H1 (cell line): ENCODE measurements at regions of chr6 and their contacts with region 1.

Region 1: GRCh38 chr6:33607784-33608161 is 13.3 kb upstream of the ITPR3 start:
- DNase-seq: no peak
- H3K4me3 ChIP-seq: no peak overlapping the region
- H3K27ac ChIP-seq: no peak overlapping the region
- H3K4me1 ChIP-seq: peaks cover 6 to 42% (median 26%) of the 10 kb centered on the region in 4 experiments
- H3K27me3 ChIP-seq: no peaks in the 10 kb centered on the region
- CTCF ChIP-seq: peak; percentile 38 to 63 (median 61); a peak in 3 of 4 replicates
- EP300 ChIP-seq: no peak
- POLR2A ChIP-seq: no peak
- RAD21 ChIP-seq: peak; percentile 60 to 63

Region 2: DNA sequence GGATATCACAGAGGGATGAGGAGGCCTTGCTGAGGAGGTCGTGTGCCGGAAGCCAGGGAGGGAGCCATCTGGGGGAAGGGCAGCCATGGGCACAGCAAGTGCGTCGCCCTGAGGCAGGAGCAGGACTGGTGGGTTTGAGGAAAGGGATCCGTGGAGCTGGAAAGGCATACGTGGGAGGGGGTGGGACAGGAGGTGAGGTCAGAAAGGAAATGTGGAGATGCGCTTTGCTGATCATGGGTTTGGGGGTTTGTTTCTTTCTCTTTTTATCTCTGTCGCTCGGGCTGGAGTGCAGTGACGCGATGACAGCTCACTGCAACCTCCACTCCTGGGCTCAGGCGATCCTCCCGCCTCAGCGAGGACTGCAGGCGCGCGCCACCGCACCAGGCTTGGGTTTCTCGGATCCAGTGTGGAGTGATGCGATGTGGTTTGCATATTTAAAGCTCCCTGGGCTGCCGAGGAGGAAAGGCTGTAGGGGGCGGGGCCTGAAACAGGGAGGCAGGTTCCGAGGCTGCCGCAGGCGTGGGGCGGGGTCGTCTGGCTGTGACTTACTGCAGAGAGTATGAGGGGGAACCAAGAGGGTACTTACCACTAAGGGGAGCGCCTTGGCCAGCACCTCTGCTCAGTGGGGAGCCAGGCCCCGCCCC is 15.2 kb before region 1 on chr6:
- CTCF ChIA-PET with region 1: interaction called, 57 read pairs
- POLR2A ChIA-PET with region 1: interaction called, 6 read pairs
- DNase-seq: peak in 1 of 2 experiments; percentile 87
- H3K4me3 ChIP-seq: peak overlapping the region in 2 of 4 experiments; percentile 26 to 53; a peak in 4 of 8 replicates
- H3K27ac ChIP-seq: no peak overlapping the region
- H3K4me1 ChIP-seq: peaks cover 5 to 28% (median 17%) of the 10 kb centered on the region in 4 experiments
- H3K27me3 ChIP-seq: no peaks in the 10 kb centered on the region
- CTCF ChIP-seq: no peak
- EP300 ChIP-seq: no peak
- POLR2A ChIP-seq: no peak
- RAD21 ChIP-seq: no peak

Region 3: DNA sequence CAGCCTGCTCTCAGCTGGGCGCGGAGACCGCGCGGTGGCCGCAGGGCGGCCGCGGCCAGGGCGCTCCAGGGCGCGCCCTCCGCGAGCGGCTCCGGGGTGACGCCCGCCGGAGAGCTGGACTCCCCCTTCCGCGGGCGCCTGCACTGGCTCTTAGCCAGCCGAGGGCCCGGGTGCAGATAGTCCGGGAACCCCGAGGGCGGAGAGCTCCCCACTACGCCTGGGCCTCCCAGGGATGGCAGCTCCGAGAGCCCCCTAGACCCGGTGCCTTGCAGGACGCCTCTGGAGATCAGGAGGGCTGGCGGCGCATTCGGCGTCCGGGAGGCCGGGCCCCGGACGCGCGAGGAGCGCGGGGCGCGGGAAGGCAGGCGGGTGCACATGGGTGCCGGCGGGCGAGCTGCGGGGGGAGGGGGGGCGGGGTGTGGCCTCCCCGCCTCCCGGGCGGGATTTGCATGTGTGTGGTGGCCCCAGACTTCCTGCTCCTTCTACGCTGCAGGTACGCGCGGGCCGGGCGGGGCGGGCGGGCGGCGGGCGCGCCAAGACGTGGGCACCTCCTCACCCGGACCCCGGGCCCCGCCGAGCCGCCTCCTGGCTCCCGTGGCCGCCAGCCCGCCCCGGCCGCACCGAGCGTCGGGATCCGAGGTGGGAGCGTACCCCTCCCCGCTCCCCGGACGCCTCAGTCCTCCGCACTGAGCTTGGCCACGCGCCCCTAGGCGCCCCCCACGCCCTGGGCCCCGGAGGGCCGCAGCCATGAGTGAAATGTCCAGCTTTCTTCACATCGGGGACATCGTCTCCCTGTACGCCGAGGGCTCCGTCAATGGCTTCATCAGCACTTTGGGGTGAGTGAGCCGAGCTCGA is 13.3 kb after region 1 on chr6 and contains the start of gene ITPR3:
- CTCF ChIA-PET with region 1: interaction called, 17 read pairs
- POLR2A ChIA-PET with region 1: interaction called, 19 read pairs
- DNase-seq: peak in 1 of 2 experiments; percentile 79
- H3K4me3 ChIP-seq: peak within 1 kb of the TSS; percentile 70 to 85 (median 80)
- H3K27ac ChIP-seq: no peak within 1 kb of the TSS
- H3K4me1 ChIP-seq: peaks cover 6 to 15% (median 11%) of the 10 kb centered on the region in 4 experiments
- H3K27me3 ChIP-seq: peaks cover 0 to 3% (median 1%) of the 10 kb centered on the region in 4 experiments; a peak in 3 of 7 replicates
- CTCF ChIP-seq: no peak
- EP300 ChIP-seq: no peak
- POLR2A ChIP-seq: no peak
- RAD21 ChIP-seq: no peak
- total RNA-seq, gene ITPR3: 44.9 and 45.7 TPM in 2 replicates

Region 4: GRCh38 chr6:33628401-33628964 is 20.7 kb after region 1 on chr6:
- CTCF ChIA-PET with region 1: interaction called, 39 read pairs
- POLR2A ChIA-PET with region 1: interaction called, 5 read pairs
- DNase-seq: no peak
- H3K4me3 ChIP-seq: no peak overlapping the region
- H3K27ac ChIP-seq: 0 out of 2 replicates have a peak overlapping the region, but pooled peaks have one; percentile 35
- H3K4me1 ChIP-seq: peaks cover 0 to 23% (median 12%) of the 10 kb centered on the region in 4 experiments; a peak in 6 of 7 replicates
- H3K27me3 ChIP-seq: no peaks in the 10 kb centered on the region
- CTCF ChIP-seq: no peak
- EP300 ChIP-seq: no peak
- POLR2A ChIP-seq: no peak
- RAD21 ChIP-seq: no peak

Region 5: GRCh38 chr6:33672808-33673207 is 65.0 kb after region 1 on chr6:
- CTCF ChIA-PET with region 1: interaction called, 12 read pairs
- POLR2A ChIA-PET with region 1: no interaction called
- DNase-seq: no peak
- H3K4me3 ChIP-seq: no peak overlapping the region
- H3K27ac ChIP-seq: no peak overlapping the region
- H3K4me1 ChIP-seq: peaks cover 0 to 3% (median 1%) of the 10 kb centered on the region in 4 experiments; a peak in 1 of 7 replicates
- H3K27me3 ChIP-seq: no peaks in the 10 kb centered on the region
- CTCF ChIP-seq: peak in 2 of 3 experiments; percentile 45 to 73; a peak in 3 of 4 replicates
- EP300 ChIP-seq: no peak
- POLR2A ChIP-seq: no peak
- RAD21 ChIP-seq: peak; percentile 48 to 56

Region 6: DNA sequence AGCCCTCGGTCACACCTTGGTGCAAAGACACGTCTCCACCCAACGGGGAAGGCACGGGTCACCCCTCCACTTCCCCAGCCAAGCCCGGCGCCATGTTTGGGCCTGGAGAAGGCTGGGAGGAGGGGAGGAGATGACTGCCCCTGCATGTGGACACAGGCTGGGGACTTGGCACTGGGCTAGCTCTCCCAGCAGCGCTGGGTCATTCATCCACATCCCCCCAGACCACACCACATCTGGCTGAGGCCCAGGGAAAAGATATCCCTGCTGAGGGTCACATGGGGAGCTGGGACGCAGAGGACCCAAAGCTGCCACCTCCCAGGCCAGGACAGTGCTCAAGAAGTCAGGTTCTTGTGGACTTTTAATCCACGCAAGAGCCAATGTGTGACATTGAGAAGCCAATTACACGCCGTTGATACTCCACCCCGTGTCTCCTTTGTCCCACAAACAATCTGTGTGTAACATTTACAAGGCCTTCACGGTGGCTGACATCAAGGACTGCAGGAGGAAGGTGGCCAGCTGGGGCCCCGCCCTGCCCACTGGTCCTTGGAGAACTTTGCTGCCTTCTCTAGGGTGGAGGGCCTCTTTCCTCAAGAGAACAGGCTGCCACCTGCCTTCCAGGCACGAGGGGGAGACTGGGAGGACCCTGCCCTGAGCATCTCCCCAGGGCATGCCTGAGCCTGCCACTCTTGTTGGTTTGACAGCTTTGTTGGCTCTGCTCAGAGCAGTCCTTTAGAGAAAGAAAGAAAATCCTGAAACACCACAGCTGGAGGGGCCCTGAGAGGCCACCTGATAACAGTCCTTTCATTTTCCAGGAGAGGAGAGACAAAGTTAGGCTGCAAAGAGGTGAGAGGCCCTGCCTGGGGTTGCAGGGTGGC is 144.2 kb after region 1 on chr6:
- CTCF ChIA-PET with region 1: no interaction called
- POLR2A ChIA-PET with region 1: no interaction called
- DNase-seq: no peak
- H3K4me3 ChIP-seq: no peak overlapping the region
- H3K27ac ChIP-seq: no peak overlapping the region
- H3K4me1 ChIP-seq: peaks cover 1 to 15% (median 8%) of the 10 kb centered on the region in 4 experiments
- H3K27me3 ChIP-seq: no peaks in the 10 kb centered on the region
- CTCF ChIP-seq: no peak
- EP300 ChIP-seq: no peak
- POLR2A ChIP-seq: no peak
- RAD21 ChIP-seq: no peak